A673 (cell line): ENCODE measurements at regions of chr6 and their contacts with region 1.

Region 1: DNA sequence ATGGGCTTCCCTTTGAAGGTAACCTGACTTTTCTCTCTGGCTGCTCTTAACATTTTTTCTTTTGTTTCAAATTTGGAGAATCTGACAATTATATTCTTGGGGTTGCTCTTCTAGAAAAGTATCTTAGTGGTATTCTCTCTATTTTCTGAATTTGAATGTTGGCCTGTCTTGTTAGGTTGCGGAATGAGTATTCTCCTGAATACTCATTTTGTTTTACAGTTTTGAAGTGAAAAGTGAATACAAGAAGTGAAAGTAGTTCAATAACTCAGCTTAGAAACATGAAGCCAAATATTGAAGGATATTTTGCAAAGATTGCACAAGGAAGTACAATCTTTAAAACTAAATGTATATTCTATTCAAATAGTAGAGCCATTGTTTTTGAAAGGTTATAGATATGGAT is 120.2 kb upstream of the MAP3K4 start:
- DNase-seq: no peak
- H3K4me3 ChIP-seq: no peak overlapping the region
- H3K27ac ChIP-seq: no peak overlapping the region
- H3K4me1 ChIP-seq: no peaks in the 10 kb centered on the region
- H3K27me3 ChIP-seq: no peaks in the 10 kb centered on the region
- CTCF ChIP-seq: no peak

Region 2: GRCh38 chr6:160692364-160692959 is 178.9 kb before region 1 on chr6:
- CTCF ChIA-PET with region 1: no interaction called
- POLR2A ChIA-PET with region 1: no interaction called
- intact Hi-C with region 1: no loop called
- DNase-seq: peak; percentile 16
- H3K4me3 ChIP-seq: no peak overlapping the region
- H3K27ac ChIP-seq: no peak overlapping the region
- H3K4me1 ChIP-seq: no peaks in the 10 kb centered on the region
- H3K27me3 ChIP-seq: no peaks in the 10 kb centered on the region
- CTCF ChIP-seq: peak; percentile 37; the same call in 1 of the 2 replicates

Region 3: GRCh38 chr6:160853946-160854345 is 17.4 kb before region 1 on chr6:
- CTCF ChIA-PET with region 1: no interaction called
- POLR2A ChIA-PET with region 1: no interaction called
- intact Hi-C with region 1: no loop called
- DNase-seq: no peak
- H3K4me3 ChIP-seq: no peak overlapping the region
- H3K27ac ChIP-seq: no peak overlapping the region
- H3K4me1 ChIP-seq: no peaks in the 10 kb centered on the region
- H3K27me3 ChIP-seq: peaks cover 8% of the 10 kb centered on the region
- CTCF ChIP-seq: no peak

Region 4: GRCh38 chr6:161557333-161558107 is 686.2 kb after region 1 on chr6:
- CTCF ChIA-PET with region 1: no interaction called
- POLR2A ChIA-PET with region 1: interaction called, 11 read pairs
- intact Hi-C with region 1: no loop called
- DNase-seq: no peak
- H3K4me3 ChIP-seq: no peak overlapping the region
- H3K27ac ChIP-seq: no peak overlapping the region
- H3K4me1 ChIP-seq: no peaks in the 10 kb centered on the region
- H3K27me3 ChIP-seq: peaks cover 9% of the 10 kb centered on the region
- CTCF ChIP-seq: no peak

Region 5: GRCh38 chr6:162074641-162075275 is 1203.4 kb after region 1 on chr6:
- CTCF ChIA-PET with region 1: no interaction called
- POLR2A ChIA-PET with region 1: no interaction called
- intact Hi-C with region 1: no loop called
- DNase-seq: no peak
- H3K4me3 ChIP-seq: no peak overlapping the region
- H3K27ac ChIP-seq: no peak overlapping the region
- H3K4me1 ChIP-seq: no peaks in the 10 kb centered on the region
- H3K27me3 ChIP-seq: no peaks in the 10 kb centered on the region
- CTCF ChIP-seq: no peak